MCF 10A (cell line): ENCODE measurements at regions of chr16 and their contacts with region 1.

Region 1: GRCh38 chr16:66830422-66831404 is at the start of gene NAE1:
- DNase-seq: peak; percentile 86
- H3K4me3 Mint-ChIP-seq: peak within 1 kb of the TSS; percentile 66
- H3K27ac Mint-ChIP-seq: no peak within 1 kb of the TSS
- H3K4me1 Mint-ChIP-seq: peaks cover 31% of the 10 kb centered on the region
- H3K27me3 Mint-ChIP-seq: no peaks in the 10 kb centered on the region
- CTCF ChIP-seq: peak; percentile 94
- total RNA-seq, gene NAE1: 65.5 and 65.7 TPM in 2 replicates

Region 2: DNA sequence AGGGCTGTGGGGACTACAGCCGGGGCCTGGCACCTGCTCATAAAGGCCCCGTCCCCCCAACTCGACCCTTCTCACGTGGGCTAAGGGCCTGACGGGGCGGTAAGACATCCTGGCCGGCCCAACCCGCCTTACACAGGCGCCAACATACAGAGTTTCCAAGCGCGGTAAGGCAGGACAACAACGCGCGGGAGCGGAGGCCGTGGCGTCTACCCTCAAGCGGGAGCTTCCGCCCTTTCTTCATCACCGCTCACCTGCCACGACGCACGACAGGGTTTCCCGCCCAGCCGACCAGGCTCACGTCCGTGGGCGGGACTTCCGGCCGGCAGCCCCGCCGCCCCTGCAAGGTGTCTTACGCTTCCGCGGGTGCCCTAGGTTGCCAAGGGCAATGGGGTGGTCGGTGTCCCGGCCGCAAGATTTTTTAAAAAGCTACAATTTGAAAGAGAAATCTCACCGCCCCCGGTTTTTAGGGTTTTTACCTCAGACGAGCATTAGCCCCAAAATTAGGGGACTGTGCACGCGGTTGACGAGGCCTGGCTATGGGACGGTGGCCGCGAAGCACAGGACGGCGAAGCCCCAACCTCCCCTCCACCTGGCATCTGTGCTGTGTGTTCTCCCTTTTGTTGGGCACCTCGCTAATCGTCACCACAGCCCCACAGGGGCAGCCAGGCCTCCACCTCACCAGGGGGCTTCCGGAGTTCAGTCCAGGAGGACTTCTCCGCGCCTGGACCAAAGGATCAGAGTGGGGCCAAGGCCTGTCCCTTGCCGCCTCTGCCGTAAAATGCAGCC is 29.2 kb before region 1 on chr16 and contains the start of gene TERB1:
- CTCF ChIA-PET with region 1: interaction called, 11 read pairs
- POLR2A ChIA-PET with region 1: no interaction called
- intact Hi-C with region 1: no loop called
- DNase-seq: no peak
- H3K4me3 Mint-ChIP-seq: no peak within 1 kb of the TSS
- H3K27ac Mint-ChIP-seq: no peak within 1 kb of the TSS
- H3K4me1 Mint-ChIP-seq: no peaks in the 10 kb centered on the region
- H3K27me3 Mint-ChIP-seq: no peaks in the 10 kb centered on the region
- CTCF ChIP-seq: no peak
- total RNA-seq, gene TERB1: 0.26 and 0.69 TPM in 2 replicates

Region 3: DNA sequence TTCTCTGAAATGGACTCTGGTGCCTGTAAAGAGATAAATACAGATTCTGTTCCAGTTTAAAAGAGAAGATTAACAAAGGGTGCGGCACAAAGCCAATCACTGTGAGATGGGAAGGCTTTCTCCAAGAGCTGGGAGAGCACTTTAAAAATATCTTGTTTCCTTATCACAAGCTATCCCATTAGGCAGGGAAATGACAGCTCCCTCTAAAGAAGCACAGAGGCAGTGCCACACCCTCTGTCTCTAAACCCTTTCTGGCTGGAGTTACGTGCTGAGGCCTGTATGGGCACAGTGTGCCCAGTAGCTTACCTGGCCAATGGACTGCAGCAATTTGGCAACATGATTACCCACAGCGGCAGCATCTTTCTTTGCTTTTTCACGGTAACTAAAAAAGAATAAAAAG is 20.3 kb before region 1 on chr16:
- CTCF ChIA-PET with region 1: interaction called, 23 read pairs
- POLR2A ChIA-PET with region 1: interaction called, 5 read pairs
- intact Hi-C with region 1: no loop called
- DNase-seq: peak; percentile 14
- H3K4me3 Mint-ChIP-seq: no peak overlapping the region
- H3K27ac Mint-ChIP-seq: no peak overlapping the region
- H3K4me1 Mint-ChIP-seq: no peaks in the 10 kb centered on the region
- H3K27me3 Mint-ChIP-seq: no peaks in the 10 kb centered on the region
- CTCF ChIP-seq: no peak

Region 4: DNA sequence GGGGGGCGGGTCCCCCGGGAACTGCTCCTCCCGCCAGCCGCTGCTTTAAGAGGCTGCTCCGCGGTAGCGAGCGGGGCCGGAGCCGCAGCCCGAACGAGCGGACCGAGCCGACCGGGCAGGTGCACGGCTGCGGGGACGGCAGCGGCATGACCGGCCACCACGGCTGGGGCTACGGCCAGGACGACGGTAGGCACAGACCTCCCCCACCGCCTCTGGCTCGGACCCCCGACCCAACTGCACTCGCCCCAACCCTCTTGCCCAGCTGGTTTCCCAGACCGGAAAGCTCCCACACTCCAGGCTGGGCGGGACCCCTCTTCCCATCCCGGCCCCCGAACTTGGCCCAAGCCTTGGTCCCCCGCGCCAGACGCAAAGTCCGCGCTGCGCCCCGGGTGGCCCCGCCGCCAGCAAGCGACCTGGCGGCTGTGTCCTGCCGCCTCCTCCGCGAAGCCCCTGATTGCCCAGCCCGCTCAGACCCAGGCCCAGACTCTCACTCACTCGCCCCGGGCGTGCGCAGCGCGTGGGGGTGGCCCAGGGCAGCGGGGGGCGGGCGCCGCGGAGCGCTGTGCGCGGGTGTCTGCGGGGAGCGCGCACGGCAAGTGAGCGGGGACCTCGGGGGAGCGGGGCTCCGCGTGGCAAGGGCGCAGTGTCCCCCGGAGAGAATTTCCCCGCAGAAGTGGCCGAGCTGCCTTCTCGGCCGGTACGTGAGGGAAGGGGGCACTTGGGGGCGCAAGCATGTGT is 13.8 kb after region 1 on chr16 and contains the start of gene CA7:
- CTCF ChIA-PET with region 1: interaction called, 29 read pairs
- POLR2A ChIA-PET with region 1: interaction called, 3 read pairs
- intact Hi-C with region 1: no loop called
- DNase-seq: no peak
- H3K4me3 Mint-ChIP-seq: no peak within 1 kb of the TSS
- H3K27ac Mint-ChIP-seq: no peak within 1 kb of the TSS
- H3K4me1 Mint-ChIP-seq: peaks cover 7% of the 10 kb centered on the region
- H3K27me3 Mint-ChIP-seq: peaks cover 11% of the 10 kb centered on the region
- CTCF ChIP-seq: no peak
- total RNA-seq, gene CA7: not detected in 2 replicates

Region 5: DNA sequence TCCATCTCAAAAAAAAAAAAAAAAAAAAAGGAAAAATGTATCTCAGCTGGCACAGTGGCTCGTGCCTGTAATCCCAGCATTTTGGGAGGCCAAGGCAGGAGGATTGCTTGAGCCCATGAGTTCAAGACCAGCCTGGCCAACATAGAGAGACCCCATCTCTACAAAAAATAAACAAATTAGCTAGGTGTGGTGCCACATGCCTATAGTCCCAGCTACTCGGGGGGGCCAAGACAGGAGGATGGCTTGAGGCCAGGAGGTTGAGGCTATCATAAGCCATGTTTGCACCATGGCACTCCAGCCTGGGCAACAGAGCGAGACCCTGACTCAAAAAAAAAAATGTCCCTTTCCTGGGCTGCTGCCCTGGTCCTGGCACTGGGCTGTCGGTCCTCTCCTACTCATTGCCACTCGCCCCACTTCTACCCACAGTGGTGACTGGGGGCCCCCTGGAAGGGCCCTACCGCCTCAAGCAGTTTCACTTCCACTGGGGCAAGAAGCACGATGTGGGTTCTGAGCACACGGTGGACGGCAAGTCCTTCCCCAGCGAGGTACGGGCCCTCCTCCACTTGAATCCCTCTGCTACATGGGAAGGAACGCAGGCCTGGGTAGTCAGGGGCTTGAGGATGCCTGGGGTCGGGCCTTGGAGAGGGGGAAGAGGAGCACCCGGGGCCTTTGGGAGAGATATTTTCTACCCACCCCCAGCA is 19.6 kb after region 1 on chr16:
- CTCF ChIA-PET with region 1: interaction called, 21 read pairs
- POLR2A ChIA-PET with region 1: interaction called, 3 read pairs
- intact Hi-C with region 1: no loop called
- DNase-seq: no peak
- H3K4me3 Mint-ChIP-seq: no peak overlapping the region
- H3K27ac Mint-ChIP-seq: no peak overlapping the region
- H3K4me1 Mint-ChIP-seq: no peaks in the 10 kb centered on the region
- H3K27me3 Mint-ChIP-seq: peaks cover 5% of the 10 kb centered on the region
- CTCF ChIP-seq: no peak

Region 6: GRCh38 chr16:66858740-66859396 is 28.2 kb after region 1 on chr16:
- CTCF ChIA-PET with region 1: interaction called, 18 read pairs
- POLR2A ChIA-PET with region 1: interaction called, 4 read pairs
- intact Hi-C with region 1: no loop called
- DNase-seq: peak; percentile 87
- H3K4me3 Mint-ChIP-seq: no peak overlapping the region
- H3K27ac Mint-ChIP-seq: no peak overlapping the region
- H3K4me1 Mint-ChIP-seq: peaks cover 5% of the 10 kb centered on the region
- H3K27me3 Mint-ChIP-seq: no peaks in the 10 kb centered on the region
- CTCF ChIP-seq: no peak

Region 7: DNA sequence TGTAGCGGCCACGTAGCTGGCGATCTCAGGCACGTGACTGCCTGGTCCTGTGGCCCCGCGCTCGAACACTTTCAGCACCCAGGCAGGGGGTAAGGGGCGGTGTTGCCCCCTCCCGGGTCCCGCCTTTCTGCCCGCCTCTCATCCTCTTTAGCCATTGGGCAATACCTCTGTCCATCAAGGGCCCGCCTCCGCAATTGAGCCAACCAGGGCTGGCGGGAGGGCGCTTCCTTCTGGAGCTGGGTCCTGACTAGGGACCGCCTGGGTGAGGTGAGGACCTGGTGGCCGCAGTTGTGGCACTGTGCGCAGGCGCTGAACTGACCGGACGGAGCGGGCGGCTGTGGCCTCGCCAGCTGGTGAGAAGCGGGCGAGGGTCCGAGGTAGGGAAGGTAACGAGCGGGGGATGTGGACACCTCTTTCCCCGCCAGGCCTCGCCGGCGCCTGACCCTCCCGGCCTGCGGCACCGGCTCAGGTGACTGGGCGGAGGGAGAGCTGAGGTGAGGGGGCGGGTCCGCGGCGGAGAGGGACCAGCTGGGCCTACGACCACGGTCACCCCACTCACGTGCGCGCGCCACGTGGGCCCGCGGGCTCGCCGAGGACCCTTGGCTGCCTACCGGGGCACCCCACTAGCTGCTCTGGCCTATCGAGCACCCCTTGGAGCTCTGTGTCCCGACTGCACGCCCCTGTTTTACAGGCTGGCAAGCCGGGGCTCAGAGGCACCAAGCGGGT is 49.7 kb after region 1 on chr16 and contains the start of gene PDP2:
- CTCF ChIA-PET with region 1: interaction called, 197 read pairs
- POLR2A ChIA-PET with region 1: interaction called, 8 read pairs
- intact Hi-C with region 1: no loop called
- DNase-seq: peak; percentile 96
- H3K4me3 Mint-ChIP-seq: peak within 1 kb of the TSS; percentile 96
- H3K27ac Mint-ChIP-seq: peak within 1 kb of the TSS; percentile 90
- H3K4me1 Mint-ChIP-seq: peaks cover 11% of the 10 kb centered on the region
- H3K27me3 Mint-ChIP-seq: no peaks in the 10 kb centered on the region
- CTCF ChIP-seq: no peak
- total RNA-seq, gene PDP2: 21.5 and 22.8 TPM in 2 replicates

Region 8: GRCh38 chr16:67013823-67014633 is 183.3 kb after region 1 on chr16:
- CTCF ChIA-PET with region 1: no interaction called
- POLR2A ChIA-PET with region 1: no interaction called
- intact Hi-C with region 1: no loop called
- DNase-seq: peak; percentile 44
- H3K4me3 Mint-ChIP-seq: peak overlapping the region; percentile 35
- H3K27ac Mint-ChIP-seq: no peak overlapping the region
- H3K4me1 Mint-ChIP-seq: no peaks in the 10 kb centered on the region
- H3K27me3 Mint-ChIP-seq: no peaks in the 10 kb centered on the region
- CTCF ChIP-seq: no peak